H1 (cell line): ENCODE measurements at regions of chr1 and their contacts with region 1.

Region 1: DNA sequence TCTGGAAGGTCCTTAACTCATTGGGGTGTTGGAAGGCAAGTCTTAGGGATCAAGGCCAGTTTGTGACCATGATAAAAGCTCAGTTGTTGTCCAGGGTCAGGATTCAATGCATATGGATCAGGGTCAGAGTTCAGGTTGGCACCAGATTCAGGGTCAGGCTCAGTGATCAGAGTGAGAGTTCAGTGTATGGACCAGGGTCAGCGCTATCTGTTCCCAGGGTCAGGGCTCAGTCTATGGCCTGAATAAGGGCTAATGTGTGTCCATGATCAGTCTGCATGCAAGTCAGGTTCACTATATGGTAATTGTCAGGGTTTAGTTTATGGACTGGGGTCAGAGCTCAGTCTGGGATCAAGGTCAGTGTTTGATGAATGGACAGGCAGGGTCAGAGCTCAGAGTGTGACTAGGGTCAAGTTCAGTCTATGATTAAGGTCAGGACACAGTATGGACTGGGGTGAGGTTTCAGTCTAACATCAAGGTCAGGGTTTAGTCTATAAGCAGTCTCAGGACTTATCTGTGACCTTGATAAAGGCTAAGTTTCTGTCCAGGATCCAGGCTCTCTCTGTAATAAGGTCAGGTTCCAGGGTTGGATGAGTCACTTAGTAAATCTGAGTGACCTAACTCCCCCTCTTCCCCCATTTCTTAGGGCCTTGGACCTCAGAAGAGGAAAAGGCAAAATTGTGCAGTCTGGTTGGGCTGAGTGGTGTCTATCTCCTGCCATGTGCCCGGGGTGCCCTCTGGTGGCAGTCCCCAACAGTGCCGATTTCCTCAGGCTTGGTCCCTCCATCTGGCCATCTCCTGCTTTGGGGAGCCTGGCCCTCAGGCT is 23.8 kb downstream of the KNCN start:
- DNase-seq: peak; percentile 47 to 96
- H3K4me3 ChIP-seq: no peak overlapping the region
- H3K27ac ChIP-seq: no peak overlapping the region
- H3K4me1 ChIP-seq: peaks cover 8 to 31% (median 18%) of the 10 kb centered on the region in 4 experiments
- H3K27me3 ChIP-seq: peaks cover 22 to 88% (median 72%) of the 10 kb centered on the region in 4 experiments
- CTCF ChIP-seq: peak in 2 of 3 experiments; percentile 97 to 99; a peak in 3 of 4 replicates
- EP300 ChIP-seq: no peak
- POLR2A ChIP-seq: no peak
- RAD21 ChIP-seq: peak; percentile 98 to 100

Region 2: DNA sequence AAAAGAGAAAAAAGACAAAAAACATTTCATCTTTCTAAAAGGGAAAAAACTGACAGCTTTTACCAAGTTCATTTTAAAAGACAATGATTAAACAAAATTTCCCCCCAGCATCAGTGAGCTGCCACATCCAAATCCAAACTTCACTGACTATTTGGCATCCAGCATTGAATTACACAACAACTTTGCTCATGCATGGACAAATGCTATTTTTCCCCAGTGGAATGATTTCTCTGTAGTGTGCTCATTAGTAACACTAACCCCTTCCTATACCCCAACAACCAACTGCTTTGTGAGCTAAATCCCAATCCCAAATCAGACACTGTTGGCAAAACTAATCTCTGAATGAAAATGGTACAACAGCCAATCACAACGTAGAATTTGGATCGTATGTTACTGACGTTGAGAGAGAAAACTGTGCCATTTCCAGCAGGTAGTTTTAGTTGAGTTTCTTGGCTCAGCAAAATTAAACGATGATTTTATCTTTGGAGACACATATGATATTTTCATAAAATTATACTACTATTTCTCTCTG is 433.1 kb before region 1 on chr1:
- CTCF ChIA-PET with region 1: no interaction called
- POLR2A ChIA-PET with region 1: no interaction called
- DNase-seq: no peak
- H3K4me3 ChIP-seq: no peak overlapping the region
- H3K27ac ChIP-seq: no peak overlapping the region
- H3K4me1 ChIP-seq: no peaks in the 10 kb centered on the region
- H3K27me3 ChIP-seq: no peaks in the 10 kb centered on the region
- CTCF ChIP-seq: no peak
- EP300 ChIP-seq: no peak
- POLR2A ChIP-seq: no peak
- RAD21 ChIP-seq: no peak

Region 3: GRCh38 chr1:46442317-46443161 is 85.1 kb before region 1 on chr1:
- CTCF ChIA-PET with region 1: interaction called, 497 read pairs
- POLR2A ChIA-PET with region 1: interaction called, 20 read pairs
- DNase-seq: peak; percentile 83 to 100
- H3K4me3 ChIP-seq: peak overlapping the region; percentile 38 to 68 (median 58); a peak in 7 of 8 replicates
- H3K27ac ChIP-seq: peak overlapping the region; percentile 51; the same call in 1 of the 2 replicates
- H3K4me1 ChIP-seq: peaks cover 1 to 17% (median 6%) of the 10 kb centered on the region in 4 experiments; a peak in 6 of 7 replicates
- H3K27me3 ChIP-seq: peaks cover 7 to 14% (median 13%) of the 10 kb centered on the region in 4 experiments
- CTCF ChIP-seq: peak; percentile 81 to 95 (median 89)
- EP300 ChIP-seq: no peak
- POLR2A ChIP-seq: no peak
- RAD21 ChIP-seq: peak; percentile 71 to 80

Region 4: GRCh38 chr1:46477153-46477929 is 50.3 kb before region 1 on chr1:
- CTCF ChIA-PET with region 1: interaction called, 1,068 read pairs
- POLR2A ChIA-PET with region 1: interaction called, 3 read pairs
- DNase-seq: peak; percentile 51 to 92
- H3K4me3 ChIP-seq: no peak overlapping the region
- H3K27ac ChIP-seq: no peak overlapping the region
- H3K4me1 ChIP-seq: peaks cover 3 to 14% (median 10%) of the 10 kb centered on the region in 4 experiments
- H3K27me3 ChIP-seq: peaks cover 0 to 53% (median 43%) of the 10 kb centered on the region in 4 experiments; a peak in 6 of 7 replicates
- CTCF ChIP-seq: peak; percentile 84 to 88 (median 88)
- EP300 ChIP-seq: no peak
- POLR2A ChIP-seq: no peak
- RAD21 ChIP-seq: peak; percentile 83 to 87

Region 5: GRCh38 chr1:46556822-46557221 is 29.1 kb after region 1 on chr1:
- CTCF ChIA-PET with region 1: interaction called, 322 read pairs
- POLR2A ChIA-PET with region 1: no interaction called
- DNase-seq: no peak
- H3K4me3 ChIP-seq: no peak overlapping the region
- H3K27ac ChIP-seq: no peak overlapping the region
- H3K4me1 ChIP-seq: no peaks in the 10 kb centered on the region; a peak in 1 of 7 replicates
- H3K27me3 ChIP-seq: no peaks in the 10 kb centered on the region; a peak in 1 of 7 replicates
- CTCF ChIP-seq: no peak
- EP300 ChIP-seq: no peak
- POLR2A ChIP-seq: no peak
- RAD21 ChIP-seq: no peak

Region 6: DNA sequence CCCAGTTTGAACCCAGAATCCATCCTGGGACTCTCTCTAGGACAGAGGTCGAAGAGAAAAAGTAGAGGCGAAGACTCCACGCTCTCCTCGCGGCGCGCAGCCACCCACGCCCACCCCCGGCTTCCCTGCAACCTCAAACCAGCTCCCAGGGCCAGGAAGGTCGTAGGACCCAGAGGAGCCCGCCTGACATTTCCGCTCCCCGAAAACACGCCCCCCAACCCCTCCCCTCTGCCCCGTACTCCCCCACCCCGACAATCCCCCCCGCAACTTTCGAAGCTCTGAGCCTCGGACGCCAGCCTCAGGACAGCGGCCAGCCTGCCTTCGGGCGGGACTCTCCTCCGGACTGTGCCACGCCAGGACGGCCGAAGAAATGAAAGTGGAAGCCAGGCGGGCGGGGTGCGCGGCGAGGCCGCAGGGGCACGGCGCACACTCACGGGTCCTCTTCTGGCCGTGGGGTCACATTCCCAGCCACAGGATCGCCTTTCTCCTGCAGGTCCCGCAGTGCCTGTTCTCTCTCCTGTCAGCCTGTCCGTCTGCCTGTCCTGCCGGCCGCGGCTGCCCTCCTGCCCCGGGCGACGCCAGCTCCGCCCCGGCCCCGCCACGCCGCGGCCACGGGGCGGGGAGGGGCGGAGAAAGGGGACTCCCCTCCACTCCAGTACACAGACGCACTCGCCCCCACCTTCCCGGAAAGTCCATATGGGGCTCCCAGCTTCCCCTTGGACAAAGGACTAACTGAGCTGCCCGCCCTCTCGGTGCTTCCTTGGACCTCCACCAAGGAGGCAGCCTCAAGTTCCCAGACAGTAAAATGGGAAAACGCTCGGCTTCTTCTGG is 88.8 kb after region 1 on chr1 and contains the start of gene MOB3C:
- CTCF ChIA-PET with region 1: interaction called, 34 read pairs
- POLR2A ChIA-PET with region 1: no interaction called
- DNase-seq: peak in 1 of 2 experiments; percentile 72
- H3K4me3 ChIP-seq: peak within 1 kb of the TSS; percentile 47 to 83 (median 82)
- H3K27ac ChIP-seq: no peak within 1 kb of the TSS
- H3K4me1 ChIP-seq: peaks cover 11 to 32% (median 23%) of the 10 kb centered on the region in 4 experiments
- H3K27me3 ChIP-seq: peaks cover 0 to 11% (median 9%) of the 10 kb centered on the region in 4 experiments; a peak in 5 of 7 replicates
- CTCF ChIP-seq: no peak
- EP300 ChIP-seq: no peak
- POLR2A ChIP-seq: no peak
- RAD21 ChIP-seq: no peak
- total RNA-seq, gene MOB3C: 5.1 and 5.8 TPM in 2 replicates